Activated CD4-positive, alpha-beta memory T cell treated with anti-CD3 and anti-CD28 coated beads, Interleukin-2, amount 10 ng/mL, durations not matched to agents 7 days and 5 days (primary cell): ENCODE measurements at regions of chr10 and their contacts with region 1.

Region 1: DNA sequence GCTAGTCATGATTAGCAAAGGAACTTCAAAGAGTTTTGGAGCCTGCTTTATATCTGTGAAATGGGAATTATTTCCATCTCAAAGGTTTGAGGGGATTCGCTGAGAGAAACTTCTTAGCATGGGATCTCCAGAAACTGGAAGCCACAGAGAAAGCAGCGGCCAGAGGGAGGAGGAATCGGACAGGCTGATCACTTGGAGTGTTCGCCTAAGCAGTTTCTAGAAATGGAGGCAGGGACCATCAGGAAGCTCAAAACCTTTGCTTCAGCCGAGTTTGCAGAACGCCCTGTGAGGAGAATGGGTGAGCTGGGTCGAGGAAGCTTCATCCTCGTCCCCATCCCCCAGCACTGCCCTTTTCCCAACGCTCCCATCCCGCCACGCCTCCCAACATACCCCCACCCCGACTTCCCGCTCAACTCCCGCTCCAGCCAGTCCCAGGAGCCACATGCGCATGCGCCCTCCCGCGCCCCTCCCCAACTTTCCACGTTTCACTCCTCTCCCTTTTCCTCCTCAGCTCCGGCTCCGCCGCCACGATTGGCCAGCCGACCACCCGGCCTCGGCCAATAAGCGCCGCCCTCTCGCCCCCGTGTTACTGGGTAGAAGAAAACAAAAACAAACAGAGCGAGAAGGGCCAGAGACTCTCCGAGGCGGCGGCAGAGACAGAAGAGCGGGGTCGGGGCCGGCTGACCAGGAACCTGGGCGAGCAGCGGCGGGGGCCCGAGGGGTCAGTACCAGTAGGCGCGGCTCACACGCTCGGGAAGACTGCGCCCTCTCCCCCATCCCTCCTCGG is at the start of gene PDCD4:
- DNase-seq: peak; percentile 96
- H3K4me3 Mint-ChIP-seq: peak within 1 kb of the TSS; percentile 90
- H3K27ac Mint-ChIP-seq: peak within 1 kb of the TSS; percentile 94
- H3K4me1 Mint-ChIP-seq: peaks cover 66% of the 10 kb centered on the region
- H3K27me3 Mint-ChIP-seq: no peaks in the 10 kb centered on the region
- total RNA-seq, gene PDCD4: 105 to 109 TPM

Region 2: GRCh38 chr10:110762849-110763211 is 108.7 kb before region 1 on chr10:
- CTCF ChIA-PET with region 1: no interaction called
- POLR2A ChIA-PET with region 1: no interaction called
- DNase-seq: no peak
- H3K4me3 Mint-ChIP-seq: no peak overlapping the region
- H3K27ac Mint-ChIP-seq: no peak overlapping the region
- H3K4me1 Mint-ChIP-seq: peaks cover 2% of the 10 kb centered on the region
- H3K27me3 Mint-ChIP-seq: peaks cover 4% of the 10 kb centered on the region

Region 3: DNA sequence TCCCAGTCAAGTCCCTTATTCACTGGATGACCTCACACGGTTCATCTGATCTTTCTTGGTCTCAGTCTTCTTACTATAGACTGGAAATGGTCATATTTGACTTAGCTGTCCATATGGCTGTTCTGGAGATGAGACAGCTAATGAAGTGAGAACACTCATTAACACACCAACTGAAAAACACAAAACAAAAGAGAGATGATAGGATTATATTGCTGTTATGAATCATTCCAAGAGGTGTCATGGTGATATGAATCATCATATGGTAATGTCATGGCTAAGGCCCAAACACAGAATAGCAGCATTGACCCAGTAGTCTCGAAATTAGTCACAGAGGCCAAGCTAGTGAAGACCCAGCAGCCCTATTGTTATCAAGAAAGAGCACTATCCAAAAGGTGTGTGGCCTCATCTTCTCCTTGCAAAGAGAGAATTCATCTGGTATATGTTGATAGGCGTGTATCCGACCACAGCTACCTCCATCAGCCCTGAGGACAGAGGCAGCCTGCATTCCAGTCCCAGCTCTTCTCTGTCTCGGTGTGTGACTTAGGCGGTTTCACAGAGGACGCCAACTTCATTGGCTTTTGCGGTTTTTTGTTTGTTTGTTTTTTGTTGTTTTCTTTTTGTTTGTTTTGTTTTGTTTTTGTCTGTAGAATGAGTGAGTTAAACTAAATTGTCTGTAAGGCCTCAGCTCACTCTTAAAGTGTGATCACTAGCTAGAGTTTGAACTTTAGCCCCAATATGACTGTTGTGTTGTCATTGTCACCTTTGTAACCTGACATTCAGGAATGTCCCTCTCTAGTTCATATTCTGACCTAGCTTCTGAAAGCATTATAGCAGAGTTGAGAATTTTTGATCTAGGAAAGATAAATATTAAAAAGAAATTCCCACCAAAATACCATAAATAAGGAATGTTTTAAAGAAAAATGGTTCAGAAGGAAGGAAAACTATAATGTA is 97.1 kb before region 1 on chr10:
- CTCF ChIA-PET with region 1: interaction called, 3 read pairs
- POLR2A ChIA-PET with region 1: interaction called, 11 read pairs
- DNase-seq: peak; percentile 64
- H3K4me3 Mint-ChIP-seq: no peak overlapping the region
- H3K27ac Mint-ChIP-seq: peak overlapping the region; percentile 89
- H3K4me1 Mint-ChIP-seq: peaks cover 23% of the 10 kb centered on the region
- H3K27me3 Mint-ChIP-seq: peaks cover 2% of the 10 kb centered on the region

Region 4: DNA sequence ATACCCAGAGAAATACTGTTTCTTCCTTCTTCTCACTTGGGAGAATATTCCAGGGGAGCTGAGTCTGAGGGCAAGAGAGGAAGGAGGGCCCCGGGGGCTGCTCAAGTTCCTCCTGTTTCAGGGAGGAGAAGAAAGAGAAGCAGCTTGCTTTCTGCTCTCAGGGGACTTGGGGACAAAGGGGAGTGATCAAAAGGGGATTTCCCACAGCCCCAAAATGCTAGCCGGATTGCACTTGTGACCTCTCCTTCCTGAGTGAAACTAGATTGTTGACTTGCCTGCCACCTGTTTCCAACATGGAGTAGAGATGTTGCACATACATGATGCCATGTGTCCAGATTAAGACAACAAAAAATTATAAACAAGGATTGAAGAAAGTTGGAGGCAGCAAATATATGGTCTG is 28.5 kb before region 1 on chr10:
- CTCF ChIA-PET with region 1: interaction called, 3 read pairs
- POLR2A ChIA-PET with region 1: interaction called, 10 read pairs
- DNase-seq: peak; percentile 65
- H3K4me3 Mint-ChIP-seq: no peak overlapping the region
- H3K27ac Mint-ChIP-seq: peak overlapping the region; percentile 17
- H3K4me1 Mint-ChIP-seq: peaks cover 31% of the 10 kb centered on the region
- H3K27me3 Mint-ChIP-seq: no peaks in the 10 kb centered on the region

Region 5: DNA sequence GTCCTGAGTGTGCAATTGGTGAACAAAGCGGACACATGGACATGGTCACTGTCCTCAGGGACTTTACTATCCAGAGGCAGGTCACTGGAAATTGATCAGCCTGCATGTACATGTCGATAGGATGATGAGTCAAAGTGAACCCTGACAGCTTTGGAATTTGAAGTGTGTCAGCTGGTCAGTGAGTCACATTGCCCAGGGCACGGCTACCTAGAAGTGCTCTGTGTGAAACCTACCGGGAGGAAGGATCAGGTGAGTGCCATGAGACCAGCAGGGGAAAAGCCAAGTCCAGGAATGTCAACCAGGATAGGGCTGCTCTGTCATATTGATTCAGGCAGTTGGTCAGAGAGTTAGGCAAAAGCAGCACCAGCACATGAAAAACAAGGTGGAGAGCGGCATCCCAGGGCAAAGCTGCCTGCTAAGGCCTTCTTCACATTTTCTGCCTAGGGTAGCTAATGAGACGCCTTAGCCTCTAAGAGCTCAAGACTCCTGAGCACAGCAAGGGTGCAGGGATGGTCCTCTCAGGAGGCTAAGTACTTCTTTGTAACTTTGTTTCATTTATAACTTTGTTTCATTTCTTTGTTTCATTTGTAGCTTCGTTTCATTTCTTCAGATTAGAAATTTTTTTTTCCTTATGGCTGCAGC is 19.1 kb before region 1 on chr10:
- CTCF ChIA-PET with region 1: interaction called, 15 read pairs
- POLR2A ChIA-PET with region 1: interaction called, 98 read pairs
- DNase-seq: peak; percentile 51
- H3K4me3 Mint-ChIP-seq: peak overlapping the region; percentile 48
- H3K27ac Mint-ChIP-seq: peak overlapping the region; percentile 57
- H3K4me1 Mint-ChIP-seq: peaks cover 61% of the 10 kb centered on the region
- H3K27me3 Mint-ChIP-seq: no peaks in the 10 kb centered on the region

Region 6: GRCh38 chr10:110857265-110858158 is 14.0 kb before region 1 on chr10:
- CTCF ChIA-PET with region 1: interaction called, 15 read pairs
- POLR2A ChIA-PET with region 1: interaction called, 98 read pairs
- DNase-seq: peak; percentile 51
- H3K4me3 Mint-ChIP-seq: peak overlapping the region; percentile 6
- H3K27ac Mint-ChIP-seq: peak overlapping the region; percentile 83
- H3K4me1 Mint-ChIP-seq: peaks cover 81% of the 10 kb centered on the region
- H3K27me3 Mint-ChIP-seq: no peaks in the 10 kb centered on the region

Region 7: GRCh38 chr10:110883924-110884323 is 12.4 kb after region 1 on chr10:
- CTCF ChIA-PET with region 1: interaction called, 5 read pairs
- POLR2A ChIA-PET with region 1: interaction called, 15 read pairs
- DNase-seq: no peak
- H3K4me3 Mint-ChIP-seq: peak overlapping the region; percentile 60
- H3K27ac Mint-ChIP-seq: peak overlapping the region; percentile 40
- H3K4me1 Mint-ChIP-seq: peaks cover 41% of the 10 kb centered on the region
- H3K27me3 Mint-ChIP-seq: no peaks in the 10 kb centered on the region

Region 8: GRCh38 chr10:110967645-110968044 is 96.2 kb after region 1 on chr10:
- CTCF ChIA-PET with region 1: no interaction called
- POLR2A ChIA-PET with region 1: no interaction called
- DNase-seq: no peak
- H3K4me3 Mint-ChIP-seq: no peak overlapping the region
- H3K27ac Mint-ChIP-seq: no peak overlapping the region
- H3K4me1 Mint-ChIP-seq: peaks cover 6% of the 10 kb centered on the region
- H3K27me3 Mint-ChIP-seq: no peaks in the 10 kb centered on the region

Region 9: GRCh38 chr10:110977662-110978061 is 106.2 kb after region 1 on chr10:
- CTCF ChIA-PET with region 1: no interaction called
- POLR2A ChIA-PET with region 1: no interaction called
- DNase-seq: no peak
- H3K4me3 Mint-ChIP-seq: no peak overlapping the region
- H3K27ac Mint-ChIP-seq: no peak overlapping the region
- H3K4me1 Mint-ChIP-seq: peaks cover 16% of the 10 kb centered on the region
- H3K27me3 Mint-ChIP-seq: no peaks in the 10 kb centered on the region